ENCODE measurements at regions of chr10 and their contacts with region 1.

Region 1: DNA sequence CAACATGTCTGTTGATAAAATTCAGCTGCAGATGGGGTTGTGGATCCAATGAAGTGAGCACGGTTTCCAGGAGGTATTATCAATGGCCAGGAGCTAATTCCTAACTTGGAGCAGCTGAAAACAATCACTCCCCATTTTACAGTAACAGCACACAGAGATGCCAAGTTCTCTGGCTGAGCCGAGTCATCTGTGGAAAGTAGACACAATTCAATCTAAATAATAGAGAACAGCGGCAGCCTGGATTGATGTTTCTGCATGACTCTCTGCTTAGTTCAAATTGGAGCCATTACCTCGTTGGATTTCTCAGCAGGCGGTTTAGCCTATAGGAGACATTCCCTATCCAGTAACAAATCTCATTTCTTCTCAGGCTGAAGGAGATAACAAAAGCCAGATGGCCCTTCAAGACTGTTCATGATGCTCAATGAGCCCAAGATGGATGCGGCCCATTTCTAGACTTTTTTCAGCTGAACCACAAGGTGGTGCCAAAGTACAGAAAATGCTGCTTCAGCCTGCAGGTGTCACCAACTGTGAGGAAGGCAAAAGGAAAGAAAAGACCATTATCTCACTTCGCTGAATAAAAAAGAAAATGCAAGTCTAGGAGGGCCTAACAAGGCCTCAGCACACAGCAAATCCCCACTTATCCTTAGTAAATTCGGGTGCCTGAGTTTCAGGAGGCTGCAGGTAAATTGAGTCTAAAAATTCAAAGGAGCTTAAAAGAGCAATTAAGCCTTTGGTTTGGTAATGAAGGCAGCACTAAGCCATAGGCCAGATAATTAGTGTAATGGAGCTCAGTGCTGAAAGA is 83.7 kb downstream of the SLC16A9 start:
- DNase-seq: peak in 8 of 9 experiments; percentile 3 to 75 (median 34)
- ATAC-seq: peak; percentile 66
- H3K4me3 ChIP-seq: no peak overlapping the region
- H3K4me3 Mint-ChIP-seq: no peak overlapping the region
- H3K27ac ChIP-seq: no peak overlapping the region
- H3K27ac Mint-ChIP-seq: no peak overlapping the region
- H3K4me1 ChIP-seq: no peaks in the 10 kb centered on the region
- H3K4me1 Mint-ChIP-seq: peaks cover 3% of the 10 kb centered on the region
- H3K27me3 ChIP-seq: no peaks in the 10 kb centered on the region
- H3K27me3 Mint-ChIP-seq: peaks cover 2% of the 10 kb centered on the region
- CTCF ChIP-seq: peak; percentile 80

Region 2: GRCh38 chr10:58531084-58531695 is 1094.7 kb before region 1 on chr10:
- CTCF ChIA-PET with region 1: interaction called, 5 read pairs
- POLR2A ChIA-PET with region 1: no interaction called
- intact Hi-C with region 1: loop called (anchors 2 to 5 kb)
- DNase-seq: peak in 7 of 9 experiments; percentile 12 to 52 (median 40)
- ATAC-seq: peak; percentile 57
- H3K4me3 ChIP-seq: no peak overlapping the region
- H3K4me3 Mint-ChIP-seq: no peak overlapping the region
- H3K27ac ChIP-seq: no peak overlapping the region
- H3K27ac Mint-ChIP-seq: no peak overlapping the region
- H3K4me1 ChIP-seq: no peaks in the 10 kb centered on the region
- H3K4me1 Mint-ChIP-seq: no peaks in the 10 kb centered on the region
- H3K27me3 ChIP-seq: no peaks in the 10 kb centered on the region
- H3K27me3 Mint-ChIP-seq: peaks cover 5% of the 10 kb centered on the region
- CTCF ChIP-seq: peak; percentile 75

Region 3: DNA sequence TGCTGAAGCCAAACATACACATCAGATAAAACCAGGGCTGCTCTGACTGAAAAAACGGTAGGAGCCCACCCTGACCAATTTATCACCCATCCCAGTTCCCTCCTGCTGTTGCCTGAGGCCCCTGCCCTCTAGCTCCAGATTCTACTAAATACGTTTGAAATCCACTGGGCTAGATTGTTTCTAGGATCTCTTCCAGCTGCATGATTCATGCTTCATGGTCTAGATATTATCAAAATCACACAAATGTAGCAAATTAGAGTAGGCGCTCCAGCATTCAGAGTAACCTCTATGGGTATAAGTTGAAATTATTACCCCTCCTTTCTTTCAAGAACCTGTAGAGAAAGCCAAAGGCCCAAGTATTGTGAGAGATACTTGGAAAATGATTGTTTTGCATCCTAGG is 112.4 kb before region 1 on chr10:
- CTCF ChIA-PET with region 1: no interaction called
- POLR2A ChIA-PET with region 1: no interaction called
- intact Hi-C with region 1: no loop called
- DNase-seq: no peak
- ATAC-seq: no peak
- H3K4me3 ChIP-seq: no peak overlapping the region
- H3K4me3 Mint-ChIP-seq: no peak overlapping the region
- H3K27ac ChIP-seq: no peak overlapping the region
- H3K27ac Mint-ChIP-seq: no peak overlapping the region
- H3K4me1 ChIP-seq: no peaks in the 10 kb centered on the region
- H3K4me1 Mint-ChIP-seq: no peaks in the 10 kb centered on the region
- H3K27me3 ChIP-seq: no peaks in the 10 kb centered on the region
- H3K27me3 Mint-ChIP-seq: no peaks in the 10 kb centered on the region
- CTCF ChIP-seq: no peak

Region 4: DNA sequence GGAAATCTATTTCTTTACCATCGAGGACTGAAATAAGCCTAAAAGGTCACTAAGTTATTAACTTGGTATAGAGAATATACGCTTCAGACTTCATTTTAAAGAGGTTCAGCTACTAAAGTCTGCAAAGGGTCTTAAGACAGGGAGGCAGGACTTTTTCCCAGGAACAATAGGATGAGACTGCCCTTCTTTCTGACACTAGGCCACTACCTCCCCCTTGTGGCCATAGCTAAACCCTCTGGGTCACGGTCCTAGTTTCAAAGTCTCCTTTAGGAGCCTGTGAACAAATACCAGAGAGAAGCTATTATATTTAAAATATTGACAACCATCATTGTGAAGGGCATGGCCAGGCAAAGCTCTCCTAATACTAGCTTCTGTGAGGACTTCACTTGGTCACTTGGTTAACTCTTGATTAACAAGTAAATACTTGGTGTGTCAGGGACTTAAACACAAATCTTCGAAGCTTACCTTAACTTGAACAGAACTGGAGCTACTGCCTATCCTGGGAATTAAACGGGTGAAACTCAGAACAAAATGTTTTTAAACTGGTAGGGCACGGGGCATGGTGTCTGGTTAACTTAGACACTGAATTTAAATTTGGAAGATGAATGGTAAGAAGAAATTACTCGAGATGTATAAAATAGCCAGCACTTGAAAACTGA is 204.8 kb after region 1 on chr10:
- CTCF ChIA-PET with region 1: interaction called, 4 read pairs
- POLR2A ChIA-PET with region 1: no interaction called
- intact Hi-C with region 1: loop called in 1 of 2 experiments (anchors 5 kb)
- DNase-seq: peak in 3 of 9 experiments; percentile 17 to 45 (median 28)
- ATAC-seq: no peak
- H3K4me3 ChIP-seq: no peak overlapping the region
- H3K4me3 Mint-ChIP-seq: no peak overlapping the region
- H3K27ac ChIP-seq: no peak overlapping the region
- H3K27ac Mint-ChIP-seq: no peak overlapping the region
- H3K4me1 ChIP-seq: no peaks in the 10 kb centered on the region
- H3K4me1 Mint-ChIP-seq: peaks cover 49% of the 10 kb centered on the region
- H3K27me3 ChIP-seq: no peaks in the 10 kb centered on the region
- H3K27me3 Mint-ChIP-seq: no peaks in the 10 kb centered on the region
- CTCF ChIP-seq: peak; percentile 50

Region 5: GRCh38 chr10:60099998-60100747 is 474.3 kb after region 1 on chr10:
- CTCF ChIA-PET with region 1: no interaction called
- POLR2A ChIA-PET with region 1: no interaction called
- intact Hi-C with region 1: loop called in 1 of 2 experiments (anchors 5 kb)
- DNase-seq: peak in 2 of 9 experiments; percentile 40 to 60
- ATAC-seq: peak; percentile 29
- H3K4me3 ChIP-seq: no peak overlapping the region
- H3K4me3 Mint-ChIP-seq: no peak overlapping the region
- H3K27ac ChIP-seq: no peak overlapping the region
- H3K27ac Mint-ChIP-seq: no peak overlapping the region
- H3K4me1 ChIP-seq: no peaks in the 10 kb centered on the region
- H3K4me1 Mint-ChIP-seq: no peaks in the 10 kb centered on the region
- H3K27me3 ChIP-seq: no peaks in the 10 kb centered on the region
- H3K27me3 Mint-ChIP-seq: no peaks in the 10 kb centered on the region
- CTCF ChIP-seq: peak; percentile 74

Region 6: GRCh38 chr10:60646966-60647796 is 1021.3 kb after region 1 on chr10:
- CTCF ChIA-PET with region 1: interaction called, 40 read pairs
- POLR2A ChIA-PET with region 1: no interaction called
- intact Hi-C with region 1: loop called in 1 of 2 experiments (anchors 1 kb)
- DNase-seq: peak in 6 of 9 experiments; percentile 10 to 65 (median 34)
- ATAC-seq: no peak
- H3K4me3 ChIP-seq: no peak overlapping the region
- H3K4me3 Mint-ChIP-seq: no peak overlapping the region
- H3K27ac ChIP-seq: no peak overlapping the region
- H3K27ac Mint-ChIP-seq: no peak overlapping the region
- H3K4me1 ChIP-seq: no peaks in the 10 kb centered on the region
- H3K4me1 Mint-ChIP-seq: peaks cover 2% of the 10 kb centered on the region
- H3K27me3 ChIP-seq: no peaks in the 10 kb centered on the region
- H3K27me3 Mint-ChIP-seq: peaks cover 4% of the 10 kb centered on the region
- CTCF ChIP-seq: peak; percentile 88

Region 7: GRCh38 chr10:61284222-61284890 is 1658.4 kb after region 1 on chr10:
- CTCF ChIA-PET with region 1: no interaction called
- POLR2A ChIA-PET with region 1: no interaction called
- intact Hi-C with region 1: loop called in 1 of 2 experiments (anchors 5 kb)
- DNase-seq: peak in 2 of 9 experiments; percentile 51 to 62
- ATAC-seq: no peak
- H3K4me3 ChIP-seq: no peak overlapping the region
- H3K4me3 Mint-ChIP-seq: peak overlapping the region; percentile 64
- H3K27ac ChIP-seq: no peak overlapping the region
- H3K27ac Mint-ChIP-seq: no peak overlapping the region
- H3K4me1 ChIP-seq: peaks cover 15% of the 10 kb centered on the region
- H3K4me1 Mint-ChIP-seq: peaks cover 24% of the 10 kb centered on the region
- H3K27me3 ChIP-seq: no peaks in the 10 kb centered on the region
- H3K27me3 Mint-ChIP-seq: no peaks in the 10 kb centered on the region
- CTCF ChIP-seq: peak; percentile 92

Measured in CD8-positive, alpha-beta T cell (primary cell).